ENCODE measurements at regions of chr2 and their contacts with region 1.

Region 1: DNA sequence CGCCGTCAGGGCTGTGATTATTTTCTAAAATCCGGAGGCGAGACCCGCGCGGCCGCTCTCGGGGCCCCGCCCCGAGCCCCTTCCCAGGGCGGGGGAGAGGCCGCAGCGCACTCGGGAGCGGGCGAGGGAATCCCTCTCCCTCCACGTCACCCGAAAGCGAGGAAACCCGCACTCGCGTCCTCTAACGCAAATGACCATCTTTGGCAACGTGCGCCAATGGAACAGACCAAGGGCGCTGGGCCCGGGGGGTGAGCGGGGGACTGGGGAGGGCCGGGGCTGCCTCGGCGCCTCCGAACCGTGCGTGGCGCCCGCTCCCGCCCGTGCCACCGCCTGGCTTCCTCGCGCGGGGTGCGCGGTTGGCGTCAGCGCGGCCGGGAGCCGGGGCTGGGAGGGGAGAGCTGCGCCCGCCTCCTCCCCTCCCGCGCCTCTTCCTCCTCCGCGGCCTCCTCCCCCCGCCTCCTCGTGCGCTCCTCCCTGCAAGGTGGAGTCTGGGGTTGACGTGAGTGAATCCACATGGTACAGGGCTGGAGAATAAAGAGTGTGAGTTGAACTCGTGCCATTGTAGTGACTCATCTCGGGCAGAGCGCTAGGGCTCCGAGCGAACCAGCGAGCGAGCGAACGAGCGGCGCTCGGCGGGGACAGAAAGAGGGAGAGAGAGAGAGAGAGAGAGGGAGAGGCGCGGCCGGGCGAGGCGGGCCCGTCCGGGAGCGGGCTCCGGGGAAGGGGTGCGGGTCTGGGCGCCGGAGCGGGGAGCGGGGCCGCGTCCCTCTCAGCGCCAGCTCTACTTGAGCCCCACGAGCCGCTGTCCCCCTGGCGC is at the start of gene FOSL2:
- DNase-seq: peak; percentile 99 to 100 (median 99)
- H3K4me3 ChIP-seq: peak within 1 kb of the TSS; percentile 79 to 93 (median 91)
- H3K27ac ChIP-seq: peak within 1 kb of the TSS; percentile 86 to 92
- H3K4me1 ChIP-seq: peaks cover 16 to 61% (median 56%) of the 10 kb centered on the region in 4 experiments
- H3K27me3 ChIP-seq: no peaks in the 10 kb centered on the region

Region 2: GRCh38 chr2:28356095-28356911 is 36.2 kb before region 1 on chr2:
- CTCF ChIA-PET with region 1: interaction called, 253 read pairs
- POLR2A ChIA-PET with region 1: interaction called, 19 read pairs
- DNase-seq: peak; percentile 79 to 88 (median 85)
- H3K4me3 ChIP-seq: no peak overlapping the region
- H3K27ac ChIP-seq: peak overlapping the region in 1 of 2 experiments; percentile 50
- H3K4me1 ChIP-seq: peaks cover 2 to 54% (median 48%) of the 10 kb centered on the region in 4 experiments
- H3K27me3 ChIP-seq: no peaks in the 10 kb centered on the region

Region 3: DNA sequence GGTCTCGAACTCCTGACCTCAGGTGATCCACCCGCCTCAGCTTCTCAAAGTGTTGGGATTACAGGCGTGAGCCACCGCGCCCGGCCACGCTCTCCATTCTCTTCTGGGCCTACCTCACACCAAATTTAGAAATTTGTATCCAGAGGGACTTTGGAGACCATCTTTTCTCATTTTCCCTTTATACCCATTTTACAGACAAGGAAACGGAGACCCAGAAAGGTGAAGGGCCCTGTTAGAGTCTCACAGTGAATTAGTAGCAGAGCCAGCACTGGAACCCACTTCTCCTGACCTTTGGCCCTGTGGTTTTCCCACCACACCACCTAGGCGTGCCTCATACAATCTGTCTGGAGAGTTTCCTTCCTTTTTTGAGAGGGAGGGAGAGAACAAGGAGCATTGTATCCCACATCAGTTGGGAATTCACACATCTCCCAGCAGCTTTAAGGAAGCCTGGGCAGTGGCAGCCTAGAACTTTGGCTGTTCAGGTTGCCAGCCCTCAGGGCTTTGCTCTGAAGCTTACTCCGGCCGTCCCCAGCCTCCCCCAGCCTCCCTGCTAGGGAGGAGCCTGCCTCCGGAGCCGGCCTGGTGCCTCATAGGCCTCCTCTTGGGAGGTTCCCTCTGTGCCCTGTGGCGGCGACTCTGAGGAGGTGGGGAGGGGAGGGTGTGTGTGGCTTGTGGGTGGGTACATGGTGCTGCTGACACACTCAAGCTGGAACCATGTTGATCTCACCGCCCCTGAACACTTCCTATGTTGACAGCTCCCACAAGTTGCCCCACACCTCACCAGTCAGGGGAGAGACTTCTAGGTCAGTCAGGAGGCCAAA is 14.0 kb after region 1 on chr2:
- CTCF ChIA-PET with region 1: interaction called, 12 read pairs
- POLR2A ChIA-PET with region 1: interaction called, 5 read pairs
- DNase-seq: peak; percentile 57 to 86 (median 85)
- H3K4me3 ChIP-seq: no peak overlapping the region
- H3K27ac ChIP-seq: no peak overlapping the region
- H3K4me1 ChIP-seq: peaks cover 9 to 61% (median 51%) of the 10 kb centered on the region in 4 experiments
- H3K27me3 ChIP-seq: no peaks in the 10 kb centered on the region

Measured in common myeloid progenitor, CD34-positive (primary cell).